Ovary (tissue), 10 donors: ENCODE measurements at regions of chr13 and their contacts with region 1.

Region 1: DNA sequence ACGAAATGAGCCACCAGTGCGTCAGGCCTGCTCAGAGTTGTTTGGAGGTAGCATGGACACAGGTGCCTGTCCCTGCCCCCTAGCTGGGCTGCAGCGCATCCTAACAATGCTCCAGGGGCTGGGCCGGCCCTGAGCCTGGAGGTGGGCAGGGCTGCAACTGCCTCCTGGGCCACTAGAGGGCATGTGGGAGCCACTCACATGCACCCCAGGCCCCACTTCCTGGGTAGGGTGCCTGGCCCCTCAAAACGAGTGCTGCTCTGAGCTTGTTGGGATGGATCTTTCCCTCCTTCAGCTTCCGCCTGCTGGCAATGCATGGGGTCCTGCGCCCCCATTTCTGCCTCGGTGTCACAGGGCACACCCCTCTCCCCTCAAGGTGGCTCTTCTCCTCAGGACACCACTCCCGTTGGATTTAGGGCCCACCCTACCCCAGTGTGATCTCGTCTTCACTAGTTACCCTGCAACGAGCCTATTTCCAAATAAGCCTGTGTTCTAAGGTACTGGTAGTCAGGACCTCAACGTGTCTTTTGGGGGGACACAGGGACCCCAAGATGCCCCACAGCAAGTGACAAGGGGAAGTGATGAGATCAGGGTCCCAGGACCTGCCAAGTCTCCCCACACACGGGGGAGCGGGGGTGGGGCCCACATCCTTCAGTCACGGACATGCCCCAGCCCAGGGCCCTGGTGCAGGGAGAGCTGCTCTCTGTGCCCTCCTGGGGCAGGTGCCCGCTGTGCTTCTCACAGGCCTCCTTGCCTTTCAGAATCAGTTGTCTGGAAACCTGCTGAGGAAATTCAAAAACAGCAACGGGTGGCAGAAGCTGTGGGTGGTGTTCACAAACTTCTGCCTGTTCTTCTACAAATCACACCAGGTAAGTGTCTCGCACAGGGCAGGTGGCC is 131.3 kb downstream of the STK24 start:
- DNase-seq: peak; percentile 68 to 87 (median 79)
- H3K4me3 ChIP-seq: no peak overlapping the region
- H3K27ac ChIP-seq: peak overlapping the region in 1 of 2 donors; percentile 41
- H3K4me1 ChIP-seq: peaks cover 2% of the 10 kb centered on the region
- H3K27me3 ChIP-seq: no peaks in the 10 kb centered on the region
- CTCF ChIP-seq: peak; percentile 91 to 96 (median 93)
- EP300 ChIP-seq: no peak
- POLR2A ChIP-seq: no peak

Region 2: GRCh38 chr13:98142380-98143156 is 303.0 kb before region 1 on chr13 and contains the start of gene FARP1:
- intact Hi-C with region 1: loop called in 1 of 4 experiments (anchors 10 kb)
- DNase-seq: peak; percentile 69 to 85 (median 77)
- H3K4me3 ChIP-seq: peak within 1 kb of the TSS; percentile 38
- H3K27ac ChIP-seq: peak within 1 kb of the TSS in 1 of 2 donors; percentile 2
- H3K4me1 ChIP-seq: peaks cover 1% of the 10 kb centered on the region
- H3K27me3 ChIP-seq: no peaks in the 10 kb centered on the region
- CTCF ChIP-seq: peak in 2 of 3 donors; percentile 60 to 65
- EP300 ChIP-seq: no peak
- POLR2A ChIP-seq: no peak
- total RNA-seq, gene FARP1: 21.9 to 90.1 (median 35.6) TPM

Region 3: DNA sequence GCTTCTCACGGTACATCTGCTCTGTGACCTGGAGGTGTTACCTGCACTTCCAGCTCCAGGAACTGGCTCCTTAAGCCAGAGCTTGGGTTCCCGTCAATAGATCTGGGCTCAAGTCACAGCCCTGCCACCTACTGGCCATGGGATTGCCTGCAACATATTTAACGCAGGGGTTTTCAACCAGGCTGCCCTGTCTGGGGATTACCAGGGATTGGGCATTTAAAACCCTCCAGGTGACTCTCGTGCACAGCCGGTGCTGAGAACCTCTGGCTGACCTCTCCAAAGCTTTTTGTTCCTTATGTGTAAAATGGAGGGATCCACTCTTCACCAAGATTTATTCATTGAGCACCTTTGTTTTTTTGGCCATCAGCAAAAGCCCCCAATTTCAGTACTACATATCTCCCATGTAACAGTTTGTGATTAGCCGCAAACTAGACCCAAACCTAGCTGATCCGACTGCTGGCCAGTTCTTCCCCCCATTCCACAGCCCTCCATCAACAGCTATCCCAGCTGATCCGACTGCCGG is 207.9 kb after region 1 on chr13:
- intact Hi-C with region 1: loop called in 3 of 4 experiments (anchors 5 kb)
- DNase-seq: peak; percentile 61 to 82 (median 75)
- H3K4me3 ChIP-seq: no peak overlapping the region
- H3K27ac ChIP-seq: no peak overlapping the region
- H3K4me1 ChIP-seq: peaks cover 2% of the 10 kb centered on the region
- H3K27me3 ChIP-seq: no peaks in the 10 kb centered on the region
- CTCF ChIP-seq: peak; percentile 64 to 76 (median 74)
- EP300 ChIP-seq: no peak
- POLR2A ChIP-seq: no peak

Region 4: DNA sequence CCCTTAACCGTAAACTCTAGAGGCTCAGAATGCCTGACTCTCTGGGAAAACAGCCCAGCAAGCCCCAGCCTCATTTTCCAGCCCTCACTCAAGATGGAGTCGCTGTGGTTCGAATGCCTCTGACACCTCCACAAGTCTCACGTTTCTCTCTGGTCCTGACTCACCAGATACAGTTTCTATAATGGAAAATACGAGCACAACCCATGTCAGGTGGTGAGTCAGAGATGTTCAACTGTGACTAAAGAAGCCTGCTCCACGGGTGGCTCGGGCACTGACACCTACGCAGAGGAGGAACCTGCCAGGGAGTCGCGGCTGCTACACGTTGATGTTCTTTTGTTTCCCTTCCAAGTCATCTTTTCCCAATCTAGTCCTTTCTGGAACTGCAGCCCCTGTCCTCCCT is 218.5 kb after region 1 on chr13:
- intact Hi-C with region 1: loop called in 1 of 4 experiments (anchors 5 kb)
- DNase-seq: no peak
- H3K4me3 ChIP-seq: no peak overlapping the region
- H3K27ac ChIP-seq: no peak overlapping the region
- H3K4me1 ChIP-seq: no peaks in the 10 kb centered on the region
- H3K27me3 ChIP-seq: no peaks in the 10 kb centered on the region
- CTCF ChIP-seq: no peak
- EP300 ChIP-seq: no peak
- POLR2A ChIP-seq: no peak

Region 5: DNA sequence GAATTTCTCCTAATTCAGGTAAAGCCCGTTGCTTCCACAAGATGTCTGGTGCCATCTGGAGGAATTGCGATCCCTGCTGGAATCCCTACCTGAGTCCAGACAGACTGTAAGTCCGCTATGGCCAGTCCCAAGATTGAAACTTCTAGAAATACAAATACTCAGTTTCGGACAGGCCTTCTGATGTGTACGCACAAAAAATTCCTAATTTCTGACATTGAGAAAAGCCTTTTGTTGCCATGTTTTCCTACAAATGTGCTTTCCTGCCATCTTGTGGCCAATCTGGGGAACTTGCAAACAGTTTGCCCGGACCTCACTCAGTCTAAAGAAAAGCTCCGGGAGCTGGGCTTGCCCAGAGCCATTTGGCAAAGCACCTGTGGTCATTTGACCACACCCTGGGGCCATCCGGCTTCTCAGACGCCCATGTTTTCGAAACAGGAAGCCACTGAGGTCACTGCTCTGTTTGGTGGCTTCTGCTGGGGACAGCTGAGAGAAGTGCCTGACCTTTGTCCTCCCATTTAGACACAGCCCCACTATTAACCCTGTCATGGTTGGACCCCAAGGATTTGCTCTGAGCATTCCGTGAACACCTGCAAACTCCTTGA is 227.5 kb after region 1 on chr13:
- intact Hi-C with region 1: loop called in 3 of 4 experiments (anchors 5 kb)
- DNase-seq: peak; percentile 41 to 66 (median 47)
- H3K4me3 ChIP-seq: no peak overlapping the region
- H3K27ac ChIP-seq: no peak overlapping the region
- H3K4me1 ChIP-seq: peaks cover 1% of the 10 kb centered on the region
- H3K27me3 ChIP-seq: no peaks in the 10 kb centered on the region
- CTCF ChIP-seq: peak; percentile 51 to 78 (median 66)
- EP300 ChIP-seq: no peak
- POLR2A ChIP-seq: no peak